ENCODE measurements at regions of chr6 and their contacts with region 1.

Region 1: GRCh38 chr6:149840345-149841075 is 23.6 kb downstream of the LRP11 start:
- DNase-seq: peak; percentile 70
- H3K4me3 ChIP-seq: no peak overlapping the region
- H3K27ac ChIP-seq: no peak overlapping the region
- H3K4me1 ChIP-seq: peaks cover 15% of the 10 kb centered on the region
- H3K27me3 ChIP-seq: no peaks in the 10 kb centered on the region
- CTCF ChIP-seq: peak; percentile 73 to 89

Region 2: GRCh38 chr6:149852180-149852579 is 11.7 kb after region 1 on chr6:
- CTCF ChIA-PET with region 1: no interaction called
- dilution Hi-C with region 1: no loop called
- in situ Hi-C with region 1: no loop called
- intact Hi-C with region 1: loop called (anchors 1 kb)
- DNase-seq: peak; percentile 77
- H3K4me3 ChIP-seq: no peak overlapping the region
- H3K27ac ChIP-seq: peak overlapping the region; percentile 64
- H3K4me1 ChIP-seq: peaks cover 59% of the 10 kb centered on the region
- H3K27me3 ChIP-seq: no peaks in the 10 kb centered on the region
- CTCF ChIP-seq: no peak

Region 3: DNA sequence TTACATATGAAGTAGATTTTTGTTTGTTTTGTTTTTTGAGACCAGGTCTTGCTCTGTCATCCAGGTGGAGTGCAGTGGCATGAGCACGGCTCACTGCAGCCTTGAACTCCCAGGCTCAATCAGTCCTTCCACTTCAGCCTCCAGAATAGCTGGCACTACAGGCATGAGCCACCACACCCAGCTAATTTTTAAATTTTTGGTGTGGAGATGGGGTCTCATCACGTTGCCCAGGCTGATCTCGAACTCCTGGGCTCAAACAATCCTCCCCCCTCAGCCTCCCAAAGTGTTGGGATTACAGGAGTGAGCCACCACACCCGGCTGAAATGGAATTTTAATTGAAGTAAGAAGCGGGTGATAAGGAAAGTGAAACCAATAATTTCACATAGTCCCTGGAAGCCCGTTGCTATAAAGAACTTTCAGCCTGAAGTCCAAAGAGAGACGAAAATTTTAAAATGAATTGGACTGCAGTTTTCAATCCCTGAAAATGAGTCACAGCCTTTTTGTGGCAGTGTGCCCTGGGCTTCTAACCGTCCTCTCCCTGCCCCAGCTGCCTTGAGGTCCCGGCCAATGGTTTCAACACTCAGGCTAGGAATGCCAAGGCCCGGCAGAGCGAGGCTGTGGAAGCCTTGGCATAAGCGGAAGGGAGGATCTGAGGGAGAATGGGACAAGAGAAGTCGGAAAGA is 56.6 kb after region 1 on chr6:
- CTCF ChIA-PET with region 1: no interaction called
- dilution Hi-C with region 1: no loop called
- in situ Hi-C with region 1: no loop called
- intact Hi-C with region 1: loop called (anchors 1 kb)
- DNase-seq: peak; percentile 80
- H3K4me3 ChIP-seq: peak overlapping the region in 2 of 3 experiments; percentile 14 to 19
- H3K27ac ChIP-seq: peak overlapping the region; percentile 71
- H3K4me1 ChIP-seq: peaks cover 67% of the 10 kb centered on the region
- H3K27me3 ChIP-seq: no peaks in the 10 kb centered on the region
- CTCF ChIP-seq: no peak

Region 4: GRCh38 chr6:150142670-150143515 is 302.4 kb after region 1 on chr6 and contains the start of gene PPP1R14C:
- CTCF ChIA-PET with region 1: no interaction called
- dilution Hi-C with region 1: no loop called
- in situ Hi-C with region 1: no loop called
- intact Hi-C with region 1: no loop called
- DNase-seq: peak; percentile 84
- H3K4me3 ChIP-seq: peak within 1 kb of the TSS; percentile 90 to 95 (median 91)
- H3K27ac ChIP-seq: peak within 1 kb of the TSS; percentile 73
- H3K4me1 ChIP-seq: peaks cover 26% of the 10 kb centered on the region
- H3K27me3 ChIP-seq: no peaks in the 10 kb centered on the region
- CTCF ChIP-seq: no peak
- total RNA-seq, gene PPP1R14C: 46.8 to 56.2 TPM